ENCODE measurements at regions of chr9 and their contacts with region 1.

Region 1: GRCh38 chr9:97468658-97469448 is 32.6 kb upstream of the TMOD1 start:
- DNase-seq: peak; percentile 69
- CTCF ChIP-seq: peak; percentile 92

Region 2: DNA sequence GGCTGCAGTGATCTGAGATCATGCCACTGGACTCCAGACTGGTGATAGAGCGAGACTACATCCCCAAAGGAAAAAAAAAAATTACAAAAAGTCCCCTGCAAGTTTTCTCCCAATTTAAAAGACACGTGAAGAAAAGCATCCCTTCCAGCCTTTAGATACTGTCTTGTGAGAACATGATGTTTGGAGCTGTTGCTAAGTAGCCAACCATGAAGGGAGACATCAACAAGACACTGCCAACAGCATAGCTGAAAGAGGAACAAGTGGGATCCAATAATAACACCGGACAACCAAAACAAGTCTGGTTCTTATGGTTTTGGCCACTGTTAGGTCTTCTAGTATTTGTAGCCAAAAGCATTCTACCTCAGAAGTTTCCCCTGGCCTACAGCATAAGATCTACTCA is 280.3 kb before region 1 on chr9:
- CTCF ChIA-PET with region 1: no interaction called
- POLR2A ChIA-PET with region 1: no interaction called
- DNase-seq: no peak
- CTCF ChIP-seq: no peak

Region 3: DNA sequence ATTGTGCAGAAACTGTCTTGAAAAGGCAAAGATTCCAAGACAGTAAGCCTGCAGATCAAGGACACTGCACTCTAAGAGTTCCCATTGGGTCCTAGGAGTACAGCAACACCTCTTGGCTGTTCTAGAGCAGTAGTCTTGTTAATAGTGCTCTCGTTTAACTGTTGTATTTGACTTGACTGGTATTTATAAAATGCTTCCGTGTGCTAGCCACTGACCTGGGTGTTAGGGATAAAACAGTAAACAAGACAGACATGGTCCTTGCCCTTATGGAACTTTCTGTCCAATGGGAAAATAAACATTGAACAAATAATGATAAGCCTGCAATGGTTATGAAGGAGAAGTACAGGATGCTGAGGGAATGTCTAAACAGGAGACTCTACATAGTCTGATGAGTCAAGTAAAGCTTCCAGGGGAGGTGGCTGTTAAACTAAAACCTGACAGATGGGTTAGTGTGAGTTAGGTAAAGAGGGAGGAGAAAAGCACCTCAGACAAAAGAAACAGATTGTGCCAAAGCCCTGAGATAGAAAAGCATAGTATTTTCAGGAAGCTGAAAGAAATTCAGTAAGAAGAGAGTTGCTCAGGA is 23.6 kb before region 1 on chr9:
- CTCF ChIA-PET with region 1: interaction called, 16 read pairs
- POLR2A ChIA-PET with region 1: no interaction called
- DNase-seq: no peak
- CTCF ChIP-seq: no peak

Region 4: DNA sequence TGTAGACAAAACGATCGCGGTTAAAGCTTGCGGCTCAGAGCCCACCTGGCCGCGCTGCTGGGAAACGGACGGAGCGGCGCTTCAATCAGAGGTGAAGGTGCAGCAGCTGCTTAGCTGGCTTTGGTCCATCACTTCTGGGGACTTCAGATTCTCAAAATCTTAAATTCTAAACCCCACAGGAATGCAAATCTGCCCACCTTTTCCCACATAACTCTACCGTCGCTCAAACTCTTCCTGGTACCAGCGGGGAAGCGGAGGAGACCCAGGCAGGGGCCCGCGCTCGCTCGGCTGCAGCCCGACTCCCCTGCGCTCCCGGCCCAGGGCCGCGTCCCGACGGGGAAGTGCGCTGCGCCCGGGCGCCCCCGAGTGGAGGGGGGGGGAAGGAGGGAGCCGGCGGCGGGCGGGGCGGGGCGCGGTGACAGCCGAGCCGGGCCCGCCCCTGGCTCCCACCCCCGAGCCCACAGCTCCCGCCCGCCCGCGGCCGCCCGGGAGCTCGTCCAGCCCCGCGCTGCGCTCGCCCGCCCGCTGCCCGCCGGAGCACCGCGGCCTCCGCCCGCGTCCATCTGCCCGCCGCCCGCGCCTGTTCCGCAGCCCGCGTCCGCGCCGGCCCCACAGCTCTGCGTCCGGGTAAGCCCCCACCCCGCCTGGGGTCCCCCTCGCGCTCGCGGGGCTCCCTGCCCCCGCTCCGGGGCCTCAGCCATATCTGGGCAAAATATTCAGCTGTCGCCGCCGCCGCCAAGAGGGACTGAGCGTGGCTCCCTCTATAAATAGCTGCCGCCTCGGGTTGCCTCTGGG is 32.5 kb after region 1 on chr9 and contains the start of gene TMOD1:
- CTCF ChIA-PET with region 1: interaction called, 159 read pairs
- POLR2A ChIA-PET with region 1: no interaction called
- DNase-seq: peak; percentile 93
- CTCF ChIP-seq: peak; percentile 52

Region 5: GRCh38 chr9:97518909-97519307 is 50.1 kb after region 1 on chr9:
- CTCF ChIA-PET with region 1: interaction called, 28 read pairs
- POLR2A ChIA-PET with region 1: no interaction called
- DNase-seq: no peak
- CTCF ChIP-seq: no peak

Region 6: GRCh38 chr9:97559111-97559514 is 90.3 kb after region 1 on chr9:
- CTCF ChIA-PET with region 1: interaction called, 20 read pairs
- POLR2A ChIA-PET with region 1: no interaction called
- DNase-seq: peak; percentile 80
- CTCF ChIP-seq: no peak

Region 7: GRCh38 chr9:97575673-97576200 is 106.9 kb after region 1 on chr9:
- CTCF ChIA-PET with region 1: interaction called, 11 read pairs
- POLR2A ChIA-PET with region 1: no interaction called
- DNase-seq: no peak
- CTCF ChIP-seq: no peak

Region 8: DNA sequence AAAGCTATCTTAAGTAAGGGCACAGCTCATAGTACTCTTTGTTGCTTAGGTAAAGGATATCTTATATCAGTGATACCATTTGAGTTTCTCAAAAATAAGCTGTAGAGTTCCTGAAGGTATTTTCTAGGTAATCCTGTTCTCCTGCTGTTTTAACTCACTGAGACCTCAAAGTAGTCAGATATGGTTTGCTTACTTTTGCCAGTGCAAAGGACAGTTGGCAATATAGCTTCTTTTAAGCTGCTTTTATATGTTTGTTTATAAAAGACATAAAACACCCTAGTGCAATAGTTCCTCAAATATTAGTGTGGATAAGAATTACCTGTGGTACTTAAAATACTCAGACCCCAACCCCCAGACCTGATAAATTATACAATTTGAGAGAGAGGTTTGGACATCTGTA is 176.9 kb after region 1 on chr9:
- CTCF ChIA-PET with region 1: interaction called, 11 read pairs
- POLR2A ChIA-PET with region 1: interaction called, 5 read pairs
- DNase-seq: no peak
- CTCF ChIP-seq: no peak